HAP-1 (cell line): ENCODE measurements at regions of chr9 and their contacts with region 1.

Region 1: GRCh38 chr9:73183917-73184861 is 32.5 kb downstream of the ANXA1 start:
- DNase-seq: peak in 1 of 2 experiments; percentile 57
- H3K4me3 ChIP-seq: no peak overlapping the region
- H3K4me1 ChIP-seq: peaks cover 12% of the 10 kb centered on the region
- H3K27me3 ChIP-seq: no peaks in the 10 kb centered on the region

Region 2: GRCh38 chr9:72280913-72281500 is 903.2 kb before region 1 on chr9:
- in situ Hi-C with region 1: loop called (anchors 25 kb)
- DNase-seq: peak; percentile 80 to 85
- H3K4me3 ChIP-seq: no peak overlapping the region
- H3K4me1 ChIP-seq: peaks cover 3% of the 10 kb centered on the region; the same call in 1 of the 2 replicates
- H3K27me3 ChIP-seq: no peaks in the 10 kb centered on the region

Region 3: GRCh38 chr9:72882117-72882775 is 301.9 kb before region 1 on chr9:
- in situ Hi-C with region 1: loop called (anchors 10 kb)
- DNase-seq: no peak
- H3K4me3 ChIP-seq: no peak overlapping the region
- H3K4me1 ChIP-seq: no peaks in the 10 kb centered on the region
- H3K27me3 ChIP-seq: no peaks in the 10 kb centered on the region

Region 4: GRCh38 chr9:72907421-72907820 is 276.8 kb before region 1 on chr9:
- in situ Hi-C with region 1: no loop called
- DNase-seq: no peak
- H3K4me3 ChIP-seq: no peak overlapping the region
- H3K4me1 ChIP-seq: no peaks in the 10 kb centered on the region
- H3K27me3 ChIP-seq: peaks cover 3% of the 10 kb centered on the region; the same call in 1 of the 2 replicates

Region 5: GRCh38 chr9:73104921-73105320 is 79.3 kb before region 1 on chr9:
- in situ Hi-C with region 1: loop called (anchors 5 kb)
- DNase-seq: no peak
- H3K4me3 ChIP-seq: no peak overlapping the region
- H3K4me1 ChIP-seq: no peaks in the 10 kb centered on the region
- H3K27me3 ChIP-seq: no peaks in the 10 kb centered on the region